OCI-LY7 (cell line): ENCODE measurements at regions of chr7 and their contacts with region 1.

Region 1: GRCh38 chr7:121126801-121127534 is 138.5 kb downstream of the CPED1 start:
- DNase-seq: peak; percentile 53
- H3K4me3 ChIP-seq: no peak overlapping the region
- H3K27ac ChIP-seq: no peak overlapping the region
- H3K4me1 ChIP-seq: peaks cover 6% of the 10 kb centered on the region
- CTCF ChIP-seq: peak; percentile 86

Region 2: DNA sequence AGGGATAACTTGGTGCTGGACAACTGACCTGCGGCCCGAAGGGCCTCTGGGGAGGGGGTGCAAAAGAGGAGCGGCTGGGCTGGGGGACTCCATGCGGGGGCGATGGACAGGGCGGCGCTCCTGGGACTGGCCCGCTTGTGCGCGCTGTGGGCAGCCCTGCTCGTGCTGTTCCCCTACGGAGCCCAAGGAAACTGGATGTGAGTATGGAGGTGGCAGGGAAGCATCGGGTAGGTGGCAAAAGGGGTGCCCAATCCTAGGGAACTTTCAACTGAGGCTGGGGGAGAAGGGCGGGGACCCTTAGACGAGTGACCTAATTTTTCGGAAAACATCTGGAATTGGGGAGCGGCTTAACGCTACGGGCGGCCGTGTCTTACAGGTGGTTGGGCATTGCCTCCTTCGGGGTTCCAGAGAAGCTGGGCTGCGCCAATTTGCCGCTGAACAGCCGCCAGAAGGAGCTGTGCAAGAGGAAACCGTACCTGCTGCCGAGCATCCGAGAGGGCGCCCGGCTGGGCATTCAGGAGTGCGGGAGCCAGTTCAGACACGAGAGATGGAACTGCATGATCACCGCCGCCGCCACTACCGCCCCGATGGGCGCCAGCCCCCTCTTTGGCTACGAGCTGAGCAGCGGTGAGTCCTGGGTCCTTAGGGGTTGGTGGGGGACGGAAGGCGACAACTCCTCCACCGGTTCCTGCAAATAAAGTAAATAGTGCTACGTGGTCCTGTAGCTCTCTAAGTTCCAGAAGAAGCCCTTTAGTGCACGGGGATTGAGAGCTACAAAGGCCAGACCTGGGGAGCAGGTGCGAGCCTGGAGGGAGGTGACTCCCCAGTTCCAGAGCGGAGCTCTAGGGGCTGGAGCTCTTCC is 202.5 kb after region 1 on chr7:
- CTCF ChIA-PET with region 1: no interaction called
- POLR2A ChIA-PET with region 1: no interaction called
- intact Hi-C with region 1: loop called (anchors 10 kb)
- DNase-seq: no peak
- H3K4me3 ChIP-seq: no peak overlapping the region
- H3K27ac ChIP-seq: no peak overlapping the region
- H3K4me1 ChIP-seq: no peaks in the 10 kb centered on the region
- CTCF ChIP-seq: no peak

Region 3: DNA sequence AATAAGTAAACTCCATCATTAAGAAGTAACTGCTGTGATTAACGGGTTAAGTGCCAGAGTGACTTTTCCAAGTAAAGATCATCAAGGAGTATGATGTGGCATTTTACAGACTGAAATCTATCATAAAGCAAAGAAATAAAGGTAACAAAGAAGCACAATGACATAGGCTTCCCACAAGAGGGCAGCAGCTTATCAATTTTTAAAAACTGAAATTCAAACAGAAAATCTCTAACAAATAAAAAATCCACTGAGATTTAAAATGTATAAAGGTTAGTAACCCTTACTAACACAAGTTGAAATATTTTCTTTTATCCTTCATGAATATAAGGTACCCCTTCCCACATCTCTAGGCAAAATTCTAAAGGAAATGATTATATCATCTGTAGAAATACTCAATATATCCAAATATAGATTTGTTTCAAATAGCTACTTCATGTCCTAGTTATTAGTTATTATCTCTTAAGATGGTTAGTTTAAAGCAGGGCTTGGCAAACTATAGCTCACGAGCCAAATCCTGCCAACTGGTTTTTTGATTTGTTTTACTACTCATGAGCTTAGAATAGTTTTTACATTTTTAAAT is 240.0 kb after region 1 on chr7:
- CTCF ChIA-PET with region 1: no interaction called
- POLR2A ChIA-PET with region 1: interaction called, 7 read pairs
- intact Hi-C with region 1: loop called (anchors 10 kb)
- DNase-seq: peak; percentile 46
- H3K4me3 ChIP-seq: no peak overlapping the region
- H3K27ac ChIP-seq: no peak overlapping the region
- H3K4me1 ChIP-seq: peaks cover 5% of the 10 kb centered on the region
- CTCF ChIP-seq: peak; percentile 96

Region 4: DNA sequence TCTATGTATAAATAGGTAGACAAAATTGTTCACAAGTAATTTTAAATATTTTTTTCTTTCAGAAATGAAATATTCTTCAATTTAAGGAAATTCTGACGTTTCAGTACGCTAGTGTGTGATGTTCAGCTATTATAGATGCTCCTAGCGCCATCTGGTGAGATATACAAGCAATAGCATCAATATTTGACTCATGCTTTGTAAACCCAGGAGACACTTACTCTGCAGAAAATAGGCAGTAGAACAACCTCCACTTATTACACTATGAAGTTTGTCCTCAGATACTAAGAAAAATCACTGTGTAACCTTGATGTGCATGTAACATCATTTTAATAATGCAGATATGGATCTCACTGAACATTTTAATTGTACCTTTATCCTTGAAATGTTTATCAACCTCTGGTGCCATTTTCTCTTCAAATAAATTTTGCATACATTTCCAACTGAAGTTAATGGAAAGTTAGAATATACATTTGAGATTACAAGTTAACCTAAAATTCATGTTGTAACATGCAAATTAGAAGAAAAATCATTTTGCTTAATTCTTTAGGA is 420.6 kb after region 1 on chr7:
- CTCF ChIA-PET with region 1: no interaction called
- POLR2A ChIA-PET with region 1: no interaction called
- intact Hi-C with region 1: loop called (anchors 5 kb)
- DNase-seq: peak; percentile 75
- H3K4me3 ChIP-seq: no peak overlapping the region
- H3K27ac ChIP-seq: no peak overlapping the region
- H3K4me1 ChIP-seq: no peaks in the 10 kb centered on the region
- CTCF ChIP-seq: peak; percentile 91